ENCODE measurements at regions of chr3 and their contacts with region 1.

Region 1: GRCh38 chr3:144187531-144188210 is 216.0 kb downstream of the DIPK2A start:
- DNase-seq: peak; percentile 55
- ATAC-seq: peak; percentile 88
- H3K4me3 ChIP-seq: no peak overlapping the region
- H3K27ac ChIP-seq: peak overlapping the region; percentile 58
- H3K4me1 ChIP-seq: peaks cover 6% of the 10 kb centered on the region; the same call in 1 of the 2 replicates
- H3K27me3 ChIP-seq: no peaks in the 10 kb centered on the region
- CTCF ChIP-seq: no peak

Region 2: DNA sequence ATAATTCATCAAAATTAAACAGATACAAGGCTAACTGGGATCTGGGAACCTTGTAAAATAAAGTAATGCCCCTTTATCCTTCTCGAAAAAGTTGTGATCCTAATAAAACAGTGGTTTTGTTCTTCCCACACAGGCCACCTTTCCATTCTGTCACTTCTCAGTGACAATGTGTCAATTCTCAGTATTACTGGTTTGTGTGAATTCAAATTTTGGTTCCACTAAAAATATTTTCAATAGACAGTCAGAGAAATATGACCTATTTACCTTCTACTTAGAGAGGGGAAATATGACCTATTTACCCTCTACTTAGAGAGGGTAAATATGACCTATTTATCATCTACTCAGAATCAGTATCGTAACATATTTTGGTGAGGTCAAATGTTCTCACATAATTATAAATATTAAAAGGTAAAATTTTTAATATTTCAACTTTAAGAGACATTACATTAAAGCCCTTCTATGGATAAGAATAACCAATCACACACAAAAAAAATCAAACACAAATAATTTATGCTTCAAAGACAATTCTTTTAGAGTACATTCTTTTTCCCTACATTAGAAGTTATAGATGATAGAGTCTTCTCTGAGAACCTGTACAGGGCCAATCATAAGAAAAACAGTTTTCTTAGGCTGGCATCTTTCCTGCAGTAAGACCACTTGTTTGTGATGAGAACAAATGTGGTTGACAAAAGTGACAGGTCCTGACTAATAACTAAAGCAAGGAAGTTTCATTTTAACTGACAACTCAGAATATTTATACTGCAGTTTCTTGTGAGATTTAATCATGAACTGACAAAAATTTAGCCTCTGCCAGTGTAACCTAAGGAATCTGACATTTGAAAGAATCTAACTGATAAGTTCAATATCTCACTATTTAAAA is 107.2 kb after region 1 on chr3:
- CTCF ChIA-PET with region 1: no interaction called
- POLR2A ChIA-PET with region 1: no interaction called
- intact Hi-C with region 1: loop called (anchors 5 kb)
- DNase-seq: no peak
- ATAC-seq: no peak
- H3K4me3 ChIP-seq: no peak overlapping the region
- H3K27ac ChIP-seq: no peak overlapping the region
- H3K4me1 ChIP-seq: no peaks in the 10 kb centered on the region
- H3K27me3 ChIP-seq: no peaks in the 10 kb centered on the region
- CTCF ChIP-seq: no peak